ENCODE measurements at regions of chr22 and their contacts with region 1.

Region 1: GRCh38 chr22:36239401-36240171 is at the start of gene APOL2:
- DNase-seq: peak; percentile 86
- ATAC-seq: peak; percentile 99
- H3K4me3 ChIP-seq: peak within 1 kb of the TSS; percentile 59 to 94 (median 81)
- H3K4me3 Mint-ChIP-seq: peak within 1 kb of the TSS; percentile 93
- H3K27ac ChIP-seq: peak within 1 kb of the TSS; percentile 61 to 77
- H3K27ac Mint-ChIP-seq: peak within 1 kb of the TSS; percentile 97
- H3K4me1 ChIP-seq: peaks cover 21 to 28% of the 10 kb centered on the region in 2 donors
- H3K4me1 Mint-ChIP-seq: peaks cover 43% of the 10 kb centered on the region
- H3K27me3 ChIP-seq: no peaks in the 10 kb centered on the region
- H3K27me3 Mint-ChIP-seq: no peaks in the 10 kb centered on the region
- CTCF ChIP-seq: peak; percentile 71
- total RNA-seq, gene APOL2: 56.8 and 60.6 TPM in 2 replicates

Region 2: GRCh38 chr22:36156515-36157419 is 82.8 kb before region 1 on chr22:
- CTCF ChIA-PET with region 1: no interaction called
- POLR2A ChIA-PET with region 1: no interaction called
- intact Hi-C with region 1: loop called (anchors 2 kb)
- DNase-seq: peak; percentile 69
- ATAC-seq: peak; percentile 59
- H3K4me3 ChIP-seq: peak overlapping the region; percentile 42 to 60 (median 55)
- H3K4me3 Mint-ChIP-seq: peak overlapping the region; percentile 94
- H3K27ac ChIP-seq: peak overlapping the region; percentile 72 to 92
- H3K27ac Mint-ChIP-seq: peak overlapping the region; percentile 93
- H3K4me1 ChIP-seq: peaks cover 53 to 69% of the 10 kb centered on the region in 2 donors
- H3K4me1 Mint-ChIP-seq: peaks cover 78% of the 10 kb centered on the region
- H3K27me3 ChIP-seq: no peaks in the 10 kb centered on the region
- H3K27me3 Mint-ChIP-seq: no peaks in the 10 kb centered on the region
- CTCF ChIP-seq: no peak

Region 3: GRCh38 chr22:36180038-36180880 is 59.3 kb before region 1 on chr22:
- CTCF ChIA-PET with region 1: interaction called, 12 read pairs
- POLR2A ChIA-PET with region 1: no interaction called
- intact Hi-C with region 1: no loop called
- DNase-seq: peak; percentile 86
- ATAC-seq: peak; percentile 98
- H3K4me3 ChIP-seq: no peak overlapping the region
- H3K4me3 Mint-ChIP-seq: no peak overlapping the region
- H3K27ac ChIP-seq: no peak overlapping the region
- H3K27ac Mint-ChIP-seq: no peak overlapping the region
- H3K4me1 ChIP-seq: peaks cover 0 to 5% of the 10 kb centered on the region in 2 donors
- H3K4me1 Mint-ChIP-seq: peaks cover 5% of the 10 kb centered on the region
- H3K27me3 ChIP-seq: no peaks in the 10 kb centered on the region
- H3K27me3 Mint-ChIP-seq: peaks cover 3% of the 10 kb centered on the region
- CTCF ChIP-seq: peak; percentile 91

Region 4: DNA sequence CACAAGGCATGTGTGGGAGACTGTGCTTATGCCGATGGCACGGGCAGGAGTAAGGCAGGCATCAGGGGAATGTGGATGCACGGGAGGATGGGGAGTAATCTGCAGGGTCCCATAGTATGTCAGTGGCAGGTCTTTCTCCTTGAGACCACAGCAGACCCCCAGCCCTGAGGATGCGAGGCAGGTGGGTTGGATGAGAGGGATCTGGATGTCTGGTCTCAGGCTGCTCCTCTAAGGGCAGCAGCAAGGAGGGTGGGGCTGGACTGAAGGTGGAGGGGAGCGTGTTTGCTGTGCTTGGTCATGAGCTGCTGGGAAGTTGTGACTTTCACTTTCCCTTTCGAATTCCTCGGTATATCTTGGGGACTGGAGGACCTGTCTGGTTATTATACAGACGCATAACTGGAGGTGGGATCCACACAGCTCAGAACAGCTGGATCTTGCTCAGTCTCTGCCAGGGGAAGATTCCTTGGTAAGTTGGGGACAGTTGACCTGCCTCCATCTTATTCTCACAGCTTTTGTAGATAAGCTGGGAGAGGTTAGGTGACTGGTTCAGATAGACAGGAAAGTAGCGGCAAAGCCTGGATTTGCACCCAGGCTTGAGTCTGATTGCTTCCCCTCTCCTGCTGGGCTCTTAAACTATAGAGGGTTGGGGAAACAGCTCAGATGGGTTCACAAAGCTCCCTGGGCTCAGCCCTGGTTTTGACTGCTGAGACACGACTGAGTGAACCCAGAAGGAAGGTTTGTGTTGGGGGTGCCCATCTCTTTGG is 13.3 kb after region 1 on chr22 and contains the start of gene APOL1:
- CTCF ChIA-PET with region 1: interaction called, 22 read pairs
- POLR2A ChIA-PET with region 1: interaction called, 9 read pairs
- intact Hi-C with region 1: loop called (anchors 1 kb)
- DNase-seq: peak; percentile 73
- ATAC-seq: peak; percentile 96
- H3K4me3 ChIP-seq: peak within 1 kb of the TSS; percentile 60 to 80 (median 74)
- H3K4me3 Mint-ChIP-seq: peak within 1 kb of the TSS; percentile 95
- H3K27ac ChIP-seq: peak within 1 kb of the TSS; percentile 68 to 70
- H3K27ac Mint-ChIP-seq: peak within 1 kb of the TSS; percentile 92
- H3K4me1 ChIP-seq: peaks cover 11 to 16% of the 10 kb centered on the region in 2 donors
- H3K4me1 Mint-ChIP-seq: peaks cover 31% of the 10 kb centered on the region
- H3K27me3 ChIP-seq: no peaks in the 10 kb centered on the region
- H3K27me3 Mint-ChIP-seq: no peaks in the 10 kb centered on the region
- CTCF ChIP-seq: no peak
- total RNA-seq, gene APOL1: 11.2 and 12.2 TPM in 2 replicates

Region 5: DNA sequence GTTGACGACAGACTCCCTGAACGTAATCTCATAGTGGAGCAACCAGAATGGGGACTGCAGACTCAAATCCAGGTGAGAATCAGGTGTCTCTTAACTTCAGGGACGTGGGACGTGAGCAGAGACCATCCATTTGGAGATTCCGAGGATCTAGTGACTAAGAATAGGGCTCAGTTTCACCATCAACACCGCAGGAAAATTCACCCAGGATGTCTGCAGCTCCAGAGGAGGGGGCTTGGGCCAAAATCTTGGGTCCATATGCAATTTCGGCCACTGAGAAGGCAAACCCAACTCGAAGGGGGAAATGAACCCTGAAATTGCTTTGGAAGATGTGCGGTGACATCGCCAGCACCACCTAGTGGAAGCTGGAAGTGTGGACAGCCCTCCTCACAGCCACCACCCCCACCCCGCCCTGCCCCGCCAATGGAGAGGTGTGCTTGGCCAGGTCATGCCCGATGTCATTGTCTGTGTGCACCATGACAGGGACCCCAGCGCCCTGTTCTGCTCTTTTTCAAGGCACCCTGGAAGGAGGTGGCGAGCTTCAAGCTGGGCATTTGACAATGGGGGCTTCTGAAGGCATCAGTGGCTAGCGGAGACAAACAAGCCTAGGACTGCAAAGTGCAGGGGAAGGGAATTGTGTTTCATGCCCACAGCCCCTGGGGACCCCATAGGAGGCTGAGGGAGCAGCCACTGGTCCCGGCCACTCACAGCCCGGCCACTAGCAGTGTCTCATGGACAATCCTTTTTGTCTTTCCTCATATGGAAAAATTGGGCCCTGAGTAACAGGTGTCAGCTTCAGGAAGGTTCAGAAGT is 38.1 kb after region 1 on chr22:
- CTCF ChIA-PET with region 1: interaction called, 11 read pairs
- POLR2A ChIA-PET with region 1: no interaction called
- intact Hi-C with region 1: loop called (anchors 5 kb)
- DNase-seq: peak; percentile 82
- ATAC-seq: peak; percentile 95
- H3K4me3 ChIP-seq: no peak overlapping the region
- H3K4me3 Mint-ChIP-seq: no peak overlapping the region
- H3K27ac ChIP-seq: no peak overlapping the region
- H3K27ac Mint-ChIP-seq: peak overlapping the region; percentile 38
- H3K4me1 ChIP-seq: peaks cover 9 to 13% of the 10 kb centered on the region in 2 donors
- H3K4me1 Mint-ChIP-seq: peaks cover 14% of the 10 kb centered on the region
- H3K27me3 ChIP-seq: no peaks in the 10 kb centered on the region
- H3K27me3 Mint-ChIP-seq: no peaks in the 10 kb centered on the region
- CTCF ChIP-seq: peak; percentile 87

Region 6: GRCh38 chr22:36481393-36482168 is 242.0 kb after region 1 on chr22 and contains the start of gene TXN2:
- CTCF ChIA-PET with region 1: interaction called, 10 read pairs
- POLR2A ChIA-PET with region 1: no interaction called
- intact Hi-C with region 1: loop called (anchors 1 kb)
- DNase-seq: peak; percentile 98
- ATAC-seq: peak; percentile 87
- H3K4me3 ChIP-seq: peak within 1 kb of the TSS; percentile 82 to 90 (median 86)
- H3K4me3 Mint-ChIP-seq: peak within 1 kb of the TSS; percentile 95
- H3K27ac ChIP-seq: peak within 1 kb of the TSS; percentile 95 to 98
- H3K27ac Mint-ChIP-seq: peak within 1 kb of the TSS; percentile 93
- H3K4me1 ChIP-seq: peaks cover 11 to 18% of the 10 kb centered on the region in 2 donors
- H3K4me1 Mint-ChIP-seq: peaks cover 17% of the 10 kb centered on the region
- H3K27me3 ChIP-seq: no peaks in the 10 kb centered on the region
- H3K27me3 Mint-ChIP-seq: no peaks in the 10 kb centered on the region
- CTCF ChIP-seq: no peak
- total RNA-seq, gene TXN2: 37.4 and 39.6 TPM in 2 replicates

Measured in B cell (primary cell).